ENCODE measurements at regions of chr1 and their contacts with region 1.

Region 1: DNA sequence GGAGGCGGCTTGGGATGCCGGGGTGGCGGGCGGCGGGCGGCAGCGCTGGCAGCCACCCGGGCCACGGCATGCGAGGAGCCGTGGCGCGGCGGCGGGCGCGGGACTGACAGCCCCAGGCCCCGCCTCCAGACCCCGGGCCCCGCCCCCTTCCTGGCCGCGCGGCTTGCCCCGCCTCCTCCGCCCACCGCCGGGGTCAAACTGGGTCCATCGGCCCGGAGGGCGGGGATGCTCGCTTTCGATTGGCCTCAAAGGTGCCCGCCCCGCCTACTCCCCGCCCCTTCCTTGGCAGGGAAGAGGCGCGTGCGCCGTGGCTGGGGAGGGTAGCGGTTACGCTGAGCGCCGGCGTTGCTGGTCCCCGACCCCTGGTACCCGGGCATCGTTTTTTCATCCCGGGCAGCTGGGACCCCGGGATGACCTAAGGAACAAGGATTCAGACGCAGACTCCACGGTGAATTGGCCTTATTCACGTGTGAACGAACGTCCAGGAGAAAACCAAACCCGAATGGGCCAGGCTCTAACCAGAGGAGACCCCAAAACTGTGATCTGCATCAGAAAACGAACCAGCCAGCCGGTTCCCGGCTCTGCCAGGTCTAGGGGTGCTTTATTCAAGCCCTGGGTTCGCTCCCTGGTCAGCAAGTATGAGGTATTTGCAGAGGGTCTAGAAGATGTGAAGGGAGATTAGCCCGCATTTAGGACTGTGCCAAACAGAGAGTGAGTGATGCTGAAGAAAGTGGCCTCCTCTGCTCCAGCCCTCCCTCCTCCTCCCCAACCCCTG is 117.2 kb upstream of the GUCA2B start:
- DNase-seq: peak; percentile 90
- H3K4me3 ChIP-seq: peak overlapping the region; percentile 2 to 85 (median 85)
- H3K27ac ChIP-seq: no peak overlapping the region
- H3K4me1 ChIP-seq: peaks cover 13% of the 10 kb centered on the region
- H3K27me3 ChIP-seq: peaks cover 4 to 6% of the 10 kb centered on the region in 2 experiments
- CTCF ChIP-seq: no peak
- POLR2A ChIP-seq: peak; percentile 27

Region 2: GRCh38 chr1:41222496-41222895 is 813.5 kb before region 1 on chr1:
- CTCF ChIA-PET with region 1: no interaction called
- POLR2A ChIA-PET with region 1: no interaction called
- dilution Hi-C with region 1: no loop called
- intact Hi-C with region 1: no loop called
- DNase-seq: peak; percentile 22
- H3K4me3 ChIP-seq: no peak overlapping the region
- H3K27ac ChIP-seq: no peak overlapping the region
- H3K4me1 ChIP-seq: no peaks in the 10 kb centered on the region
- H3K27me3 ChIP-seq: no peaks in the 10 kb centered on the region
- CTCF ChIP-seq: no peak
- POLR2A ChIP-seq: no peak

Region 3: GRCh38 chr1:41573785-41574713 is 462.0 kb before region 1 on chr1:
- CTCF ChIA-PET with region 1: interaction called, 7 read pairs
- POLR2A ChIA-PET with region 1: no interaction called
- dilution Hi-C with region 1: no loop called
- intact Hi-C with region 1: loop called (anchors 1 kb)
- DNase-seq: peak; percentile 65
- H3K4me3 ChIP-seq: no peak overlapping the region
- H3K27ac ChIP-seq: no peak overlapping the region
- H3K4me1 ChIP-seq: no peaks in the 10 kb centered on the region
- H3K27me3 ChIP-seq: no peaks in the 10 kb centered on the region
- CTCF ChIP-seq: peak; percentile 80 to 90
- POLR2A ChIP-seq: no peak

Region 4: DNA sequence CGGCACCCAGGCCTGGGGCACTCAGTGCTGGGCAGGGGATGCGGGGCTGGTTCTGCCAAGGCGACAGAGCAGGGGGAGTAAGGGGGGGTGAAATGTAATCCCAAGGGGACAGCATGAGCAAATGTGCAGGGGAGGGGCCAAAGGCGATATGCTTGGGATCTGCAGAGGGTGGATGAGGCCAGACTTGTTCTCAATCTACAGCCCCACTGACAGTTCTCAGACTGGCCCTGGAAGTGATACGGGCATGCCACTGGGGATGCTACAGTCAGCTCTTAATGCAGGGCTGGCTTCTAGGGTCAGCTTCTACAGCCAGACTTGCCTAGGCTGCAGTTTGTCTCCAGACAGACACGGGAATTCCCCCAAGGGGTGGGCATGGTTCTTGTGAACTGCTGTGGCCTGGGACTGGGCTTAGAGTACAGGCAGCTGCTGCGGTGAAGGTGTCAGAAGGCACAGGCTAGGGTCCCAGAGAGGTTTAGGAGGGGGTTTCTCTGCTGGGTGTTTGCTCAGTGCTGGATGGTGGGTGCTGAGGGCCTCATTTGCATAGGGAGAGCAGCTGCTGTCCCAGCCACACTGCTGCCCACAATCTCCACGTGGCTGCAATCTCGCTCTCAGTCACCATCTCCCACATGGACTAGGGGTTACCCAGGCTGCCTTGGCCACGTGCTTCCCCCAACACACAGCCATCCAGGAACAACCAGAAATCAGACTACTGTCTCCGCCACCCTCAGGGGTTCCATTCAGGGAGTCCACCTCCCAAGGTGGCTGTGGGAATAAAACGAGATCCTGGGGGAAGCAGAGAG is 307.4 kb before region 1 on chr1:
- CTCF ChIA-PET with region 1: no interaction called
- POLR2A ChIA-PET with region 1: no interaction called
- dilution Hi-C with region 1: no loop called
- intact Hi-C with region 1: loop called (anchors 10 kb)
- DNase-seq: no peak
- H3K4me3 ChIP-seq: no peak overlapping the region
- H3K27ac ChIP-seq: no peak overlapping the region
- H3K4me1 ChIP-seq: peaks cover 26% of the 10 kb centered on the region
- H3K27me3 ChIP-seq: no peaks in the 10 kb centered on the region
- CTCF ChIP-seq: no peak
- POLR2A ChIP-seq: no peak

Region 5: DNA sequence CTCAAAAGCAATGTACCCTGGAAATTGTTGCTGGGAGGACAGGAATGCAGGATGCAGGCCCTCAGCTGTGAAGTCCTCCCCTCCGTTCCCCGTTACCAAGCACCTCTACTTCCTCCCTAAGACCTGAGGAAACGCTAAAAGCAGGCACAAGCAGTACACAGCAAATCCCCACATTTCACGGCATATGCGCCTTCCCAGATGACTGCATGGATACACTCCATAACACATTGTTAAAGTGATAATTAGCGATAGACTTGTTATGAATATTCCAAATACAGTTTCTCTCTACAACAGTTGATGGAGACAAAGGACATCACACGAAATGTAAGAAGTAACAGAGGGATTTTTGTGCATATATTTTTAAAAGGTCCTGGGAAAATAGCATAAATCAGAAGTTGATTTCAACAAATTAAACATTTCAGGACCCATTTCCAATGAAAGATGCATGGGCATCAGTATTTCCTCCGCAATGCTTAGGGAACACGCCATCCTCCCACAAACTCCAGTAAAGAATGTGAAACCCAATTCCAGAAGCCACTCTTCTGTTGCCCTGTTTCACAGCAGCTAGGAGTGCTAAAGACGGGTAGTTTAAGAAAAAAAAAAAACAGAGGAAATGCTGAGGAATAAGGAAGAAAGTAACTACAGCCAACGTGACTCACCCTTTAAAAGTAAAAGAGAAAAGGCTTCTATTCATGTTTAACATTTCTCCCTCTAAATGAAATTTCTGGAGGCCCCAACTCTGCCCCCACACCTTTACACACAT is 192.8 kb before region 1 on chr1:
- CTCF ChIA-PET with region 1: interaction called, 9 read pairs
- POLR2A ChIA-PET with region 1: no interaction called
- dilution Hi-C with region 1: no loop called
- intact Hi-C with region 1: loop called (anchors 5 kb)
- DNase-seq: peak; percentile 52
- H3K4me3 ChIP-seq: no peak overlapping the region
- H3K27ac ChIP-seq: no peak overlapping the region
- H3K4me1 ChIP-seq: peaks cover 43% of the 10 kb centered on the region
- H3K27me3 ChIP-seq: no peaks in the 10 kb centered on the region
- CTCF ChIP-seq: no peak
- POLR2A ChIP-seq: no peak

Region 6: DNA sequence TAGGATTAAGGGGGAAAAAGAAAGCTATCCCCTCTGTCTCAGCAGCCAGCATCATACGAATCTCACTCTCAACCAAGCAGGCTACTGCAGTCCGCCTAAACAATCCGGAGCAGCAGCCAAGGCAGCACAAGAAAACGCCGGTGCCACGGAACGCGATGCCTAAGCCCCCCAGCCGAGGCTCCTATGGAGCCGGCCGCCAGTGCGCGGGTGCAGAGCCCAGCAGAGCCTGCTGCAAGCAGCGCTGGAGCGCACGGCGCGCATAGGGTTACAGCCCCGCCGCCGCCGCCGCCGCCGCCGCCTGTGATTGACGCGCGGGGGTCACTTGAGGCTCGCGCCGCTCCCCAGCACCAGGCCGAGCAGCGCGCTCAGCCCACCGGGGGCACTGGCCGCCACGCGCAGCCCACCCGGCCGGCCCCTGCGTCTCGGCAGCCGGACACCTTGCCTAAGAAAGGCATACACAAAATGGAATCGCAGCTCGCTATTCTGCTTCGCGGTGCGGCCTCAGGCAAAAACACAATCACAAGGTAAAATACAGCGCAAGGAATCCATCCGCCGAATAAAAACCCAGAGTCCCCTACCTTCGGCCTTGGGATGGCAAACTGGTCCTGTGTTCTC is 118.1 kb before region 1 on chr1:
- CTCF ChIA-PET with region 1: interaction called, 5 read pairs
- POLR2A ChIA-PET with region 1: no interaction called
- dilution Hi-C with region 1: no loop called
- intact Hi-C with region 1: loop called (anchors 1 kb)
- DNase-seq: peak; percentile 57
- H3K4me3 ChIP-seq: peak overlapping the region; percentile 21 to 58 (median 45)
- H3K27ac ChIP-seq: no peak overlapping the region
- H3K4me1 ChIP-seq: peaks cover 14% of the 10 kb centered on the region
- H3K27me3 ChIP-seq: no peaks in the 10 kb centered on the region
- CTCF ChIP-seq: no peak
- POLR2A ChIP-seq: no peak

Region 7: GRCh38 chr1:41955461-41956159 is 80.4 kb before region 1 on chr1:
- CTCF ChIA-PET with region 1: interaction called, 8 read pairs
- POLR2A ChIA-PET with region 1: no interaction called
- dilution Hi-C with region 1: no loop called
- intact Hi-C with region 1: loop called (anchors 1 kb)
- DNase-seq: peak; percentile 84
- H3K4me3 ChIP-seq: peak overlapping the region in 1 of 3 experiments; percentile 13
- H3K27ac ChIP-seq: peak overlapping the region; percentile 94
- H3K4me1 ChIP-seq: peaks cover 35% of the 10 kb centered on the region
- H3K27me3 ChIP-seq: no peaks in the 10 kb centered on the region
- CTCF ChIP-seq: no peak
- POLR2A ChIP-seq: no peak

Region 8: DNA sequence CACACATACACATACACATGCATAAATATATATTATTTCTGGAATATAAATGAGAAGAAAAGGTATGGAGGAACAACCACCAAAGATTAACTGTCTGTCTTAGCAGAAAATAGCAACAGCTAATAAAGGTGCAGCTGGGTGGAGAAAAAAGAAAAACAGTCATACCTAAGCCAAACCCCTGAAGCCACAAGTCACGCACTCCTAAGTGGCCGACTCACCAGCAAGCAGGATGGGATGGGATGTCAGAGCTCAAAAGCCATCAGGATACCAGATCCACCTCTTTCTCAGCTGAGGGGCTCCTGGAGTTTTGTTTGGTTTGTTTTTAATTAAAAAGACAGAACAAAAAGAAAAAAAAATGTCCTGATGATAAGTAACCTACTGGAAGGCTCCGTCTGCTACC is 52.6 kb before region 1 on chr1:
- CTCF ChIA-PET with region 1: no interaction called
- POLR2A ChIA-PET with region 1: no interaction called
- dilution Hi-C with region 1: no loop called
- intact Hi-C with region 1: no loop called
- DNase-seq: no peak
- H3K4me3 ChIP-seq: no peak overlapping the region
- H3K27ac ChIP-seq: no peak overlapping the region
- H3K4me1 ChIP-seq: no peaks in the 10 kb centered on the region
- H3K27me3 ChIP-seq: no peaks in the 10 kb centered on the region
- CTCF ChIP-seq: no peak
- POLR2A ChIP-seq: no peak

Region 9: DNA sequence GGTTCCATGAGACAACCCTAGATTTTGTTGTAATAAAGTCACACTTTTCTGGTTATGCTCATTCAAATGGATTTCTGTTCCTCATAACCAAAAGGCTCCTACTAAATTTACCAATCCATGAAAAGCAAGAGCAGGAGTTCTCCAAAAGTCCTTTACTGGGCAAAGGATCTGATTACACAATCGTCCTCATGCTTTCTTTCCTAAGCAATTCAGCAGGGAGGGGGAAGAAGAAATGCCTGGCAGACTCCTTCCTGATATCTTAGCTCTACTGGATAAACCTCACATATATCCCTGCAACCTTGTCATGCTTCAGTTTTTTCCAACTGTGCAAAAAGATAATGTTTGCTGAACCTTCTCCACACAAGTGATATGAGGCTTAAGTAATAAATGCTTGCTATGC is 49.6 kb after region 1 on chr1:
- CTCF ChIA-PET with region 1: no interaction called
- POLR2A ChIA-PET with region 1: no interaction called
- dilution Hi-C with region 1: no loop called
- intact Hi-C with region 1: no loop called
- DNase-seq: no peak
- H3K4me3 ChIP-seq: no peak overlapping the region
- H3K27ac ChIP-seq: no peak overlapping the region
- H3K4me1 ChIP-seq: no peaks in the 10 kb centered on the region
- H3K27me3 ChIP-seq: peaks cover 10 to 32% of the 10 kb centered on the region in 2 experiments
- CTCF ChIP-seq: no peak
- POLR2A ChIP-seq: no peak

Region 10: GRCh38 chr1:42137766-42138165 is 101.7 kb after region 1 on chr1:
- CTCF ChIA-PET with region 1: no interaction called
- POLR2A ChIA-PET with region 1: no interaction called
- dilution Hi-C with region 1: no loop called
- intact Hi-C with region 1: no loop called
- DNase-seq: no peak
- H3K4me3 ChIP-seq: no peak overlapping the region
- H3K27ac ChIP-seq: no peak overlapping the region
- H3K4me1 ChIP-seq: no peaks in the 10 kb centered on the region
- H3K27me3 ChIP-seq: peaks cover 2 to 3% of the 10 kb centered on the region in 2 experiments
- CTCF ChIP-seq: no peak
- POLR2A ChIP-seq: no peak

Measured in endothelial cell of umbilical vein (primary cell).